GM12878 (cell line): ENCODE measurements at regions of chr11 and their contacts with region 1.

Region 1: GRCh38 chr11:70913715-70914231 is 338.6 kb downstream of the SHANK2 start:
- DNase-seq: no peak
- ATAC-seq: peak; percentile 45; the same call in 2 of the 3 replicates
- H3K4me3 ChIP-seq: no peak overlapping the region
- H3K27ac ChIP-seq: no peak overlapping the region
- H3K4me1 ChIP-seq: no peaks in the 10 kb centered on the region
- H3K27me3 ChIP-seq: no peaks in the 10 kb centered on the region; a peak in 1 of 4 replicates
- CTCF ChIP-seq: no peak
- EP300 ChIP-seq: no peak
- POLR2A ChIP-seq: no peak
- RAD21 ChIP-seq: no peak

Region 2: DNA sequence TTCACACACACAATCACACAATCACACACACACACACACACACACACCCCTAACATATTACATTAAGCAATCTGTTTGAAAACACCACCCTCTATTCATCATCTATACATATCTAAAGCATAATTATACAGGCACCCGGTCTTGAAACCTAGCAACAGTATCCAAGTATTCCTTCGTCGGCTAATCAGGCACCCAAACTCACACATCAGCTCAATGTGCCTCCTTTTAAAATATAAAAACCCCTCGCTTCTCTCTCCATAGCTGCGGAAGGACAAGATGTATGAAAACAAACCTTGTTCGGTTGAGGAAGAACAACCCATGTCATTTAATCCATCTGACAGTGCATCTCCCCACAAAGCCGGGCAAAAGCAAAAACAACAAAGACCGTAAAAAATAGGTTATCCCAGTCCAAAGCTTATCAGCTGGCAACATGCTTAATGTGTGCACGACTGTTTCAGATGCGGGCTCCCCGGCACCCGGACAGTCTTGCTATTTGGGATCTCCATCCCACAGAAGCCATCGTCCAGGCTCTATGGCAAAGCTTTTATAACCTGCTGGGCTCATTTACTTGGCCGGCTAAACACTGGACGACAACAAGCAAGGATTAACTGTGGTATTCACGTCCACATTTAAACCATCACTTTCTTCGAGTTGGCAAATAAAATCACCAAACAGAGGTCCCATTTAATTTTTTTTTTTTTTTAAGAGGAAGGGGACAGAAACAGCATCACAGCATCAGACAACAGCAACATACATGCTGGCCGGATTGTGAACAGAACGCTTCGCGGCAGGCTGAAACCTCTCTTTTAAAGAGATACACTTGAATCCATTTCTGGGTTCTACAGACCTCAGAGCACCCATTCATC is 26.9 kb before region 1 on chr11:
- CTCF ChIA-PET with region 1: no interaction called
- POLR2A ChIA-PET with region 1: no interaction called
- RAD21 ChIA-PET with region 1: no interaction called
- SMC1A ChIA-PET with region 1: no interaction called
- in situ Hi-C with region 1: no loop called
- intact Hi-C with region 1: loop called (anchors 1 kb)
- DNase-seq: no peak
- ATAC-seq: no peak
- H3K4me3 ChIP-seq: no peak overlapping the region
- H3K27ac ChIP-seq: no peak overlapping the region
- H3K4me1 ChIP-seq: no peaks in the 10 kb centered on the region
- H3K27me3 ChIP-seq: no peaks in the 10 kb centered on the region; a peak in 1 of 4 replicates
- CTCF ChIP-seq: no peak
- EP300 ChIP-seq: no peak
- POLR2A ChIP-seq: no peak
- RAD21 ChIP-seq: no peak

Region 3: DNA sequence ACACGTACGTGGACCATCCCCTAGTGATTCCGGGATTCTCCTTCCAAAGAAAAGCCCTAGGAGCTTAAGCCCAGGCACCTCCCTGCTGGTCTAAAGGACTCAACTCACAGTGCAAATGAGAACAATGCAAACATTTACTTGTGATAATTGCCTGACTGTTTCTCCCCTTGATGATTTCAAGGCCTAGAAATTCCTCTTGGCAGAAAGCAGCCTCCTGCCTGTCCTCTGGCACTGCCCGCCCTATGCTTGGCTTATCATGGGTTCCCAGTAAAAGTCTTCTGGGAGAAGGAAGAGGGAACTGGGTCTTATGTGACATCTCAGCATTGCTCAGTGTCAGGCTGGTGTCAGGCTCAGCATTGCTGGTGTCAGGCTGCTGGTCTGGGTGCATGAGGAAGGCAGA is 13.2 kb before region 1 on chr11:
- CTCF ChIA-PET with region 1: no interaction called
- POLR2A ChIA-PET with region 1: no interaction called
- RAD21 ChIA-PET with region 1: no interaction called
- SMC1A ChIA-PET with region 1: no interaction called
- in situ Hi-C with region 1: no loop called
- intact Hi-C with region 1: no loop called
- DNase-seq: no peak
- ATAC-seq: no peak
- H3K4me3 ChIP-seq: no peak overlapping the region
- H3K27ac ChIP-seq: no peak overlapping the region
- H3K4me1 ChIP-seq: no peaks in the 10 kb centered on the region
- H3K27me3 ChIP-seq: no peaks in the 10 kb centered on the region
- CTCF ChIP-seq: no peak
- EP300 ChIP-seq: no peak
- POLR2A ChIP-seq: no peak
- RAD21 ChIP-seq: no peak